ENCODE measurements at regions of chr20 and their contacts with region 1.

Region 1: GRCh38 chr20:22106308-22106938 is 401.0 kb downstream of the PAX1 start:
- DNase-seq: peak; percentile 6
- H3K4me3 ChIP-seq: no peak overlapping the region
- H3K27ac ChIP-seq: no peak overlapping the region
- H3K4me1 ChIP-seq: no peaks in the 10 kb centered on the region
- H3K27me3 ChIP-seq: peaks cover 2% of the 10 kb centered on the region
- CTCF ChIP-seq: peak in 3 of 4 experiments; percentile 23 to 62 (median 41)
- POLR2A ChIP-seq: no peak

Region 2: DNA sequence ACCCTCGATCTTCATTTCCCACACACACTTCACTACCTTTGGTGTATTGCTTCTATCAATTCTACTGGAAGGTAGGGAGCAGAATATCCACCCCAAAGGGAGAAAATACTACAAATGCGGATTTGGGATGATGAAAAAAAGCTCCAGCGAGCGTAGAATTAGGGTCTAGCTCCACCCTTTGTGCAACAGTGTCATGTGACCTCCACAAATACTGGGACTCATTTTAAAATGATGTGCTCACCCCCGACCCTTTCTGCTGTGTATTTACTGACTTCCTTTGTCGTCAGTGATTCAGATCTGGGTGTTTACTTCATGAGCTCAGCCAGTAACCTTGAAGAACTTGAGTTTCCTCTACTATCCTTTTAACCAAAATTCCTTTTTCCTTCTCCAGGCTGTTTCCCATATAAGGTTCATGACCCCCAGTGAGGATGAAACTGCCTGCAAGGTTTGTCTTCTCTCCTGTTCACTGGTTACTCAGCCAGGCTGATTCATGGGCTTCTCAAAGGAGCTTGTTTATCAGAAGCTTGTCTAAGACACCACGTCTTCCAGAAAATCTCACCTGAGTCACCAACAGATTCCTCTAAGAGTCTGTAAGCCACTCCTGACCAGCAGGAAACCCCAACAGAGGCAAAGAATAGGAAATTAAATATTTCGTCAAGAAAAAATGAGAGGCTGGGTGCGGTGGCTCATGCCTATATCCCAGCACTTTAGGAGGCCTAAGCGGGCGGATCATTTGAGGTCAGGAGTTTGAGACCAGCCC is 440.6 kb before region 1 on chr20:
- intact Hi-C with region 1: no loop called
- DNase-seq: no peak
- H3K4me3 ChIP-seq: no peak overlapping the region
- H3K27ac ChIP-seq: no peak overlapping the region
- H3K4me1 ChIP-seq: no peaks in the 10 kb centered on the region
- H3K27me3 ChIP-seq: no peaks in the 10 kb centered on the region
- CTCF ChIP-seq: no peak
- POLR2A ChIP-seq: no peak

Region 3: GRCh38 chr20:21719592-21720214 is 386.7 kb before region 1 on chr20:
- intact Hi-C with region 1: loop called (anchors 5 kb)
- DNase-seq: peak; percentile 62
- H3K4me3 ChIP-seq: no peak overlapping the region
- H3K27ac ChIP-seq: no peak overlapping the region
- H3K4me1 ChIP-seq: no peaks in the 10 kb centered on the region
- H3K27me3 ChIP-seq: peaks cover 4% of the 10 kb centered on the region
- CTCF ChIP-seq: peak; percentile 53 to 79 (median 67)
- POLR2A ChIP-seq: no peak

Region 4: GRCh38 chr20:21812379-21812778 is 294.0 kb before region 1 on chr20:
- intact Hi-C with region 1: loop called (anchors 10 kb)
- DNase-seq: no peak
- H3K4me3 ChIP-seq: no peak overlapping the region
- H3K27ac ChIP-seq: no peak overlapping the region
- H3K4me1 ChIP-seq: no peaks in the 10 kb centered on the region
- H3K27me3 ChIP-seq: no peaks in the 10 kb centered on the region
- CTCF ChIP-seq: no peak
- POLR2A ChIP-seq: no peak

Measured in prostate gland (tissue), 2 donors.